B cell (primary cell): ENCODE measurements at regions of chr5 and their contacts with region 1.

Region 1: DNA sequence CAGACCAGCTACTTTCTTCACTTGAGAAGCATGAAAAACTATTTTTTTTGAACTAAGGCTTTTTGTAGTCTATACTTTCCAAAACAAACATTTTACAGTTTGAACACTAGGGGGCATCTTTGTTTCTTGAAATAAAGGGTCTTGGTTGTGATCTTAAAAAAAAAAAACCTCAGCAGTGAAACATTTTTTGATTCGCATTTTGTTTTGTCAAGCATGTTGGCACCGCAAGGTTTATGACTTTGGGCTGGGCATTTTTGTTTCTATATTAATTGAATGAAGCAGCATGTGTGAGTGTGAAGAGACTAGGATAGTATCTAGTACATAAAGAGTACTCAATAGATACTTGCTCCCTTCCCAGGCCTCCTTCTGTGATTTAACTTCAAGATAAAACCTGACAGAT is 31.6 kb upstream of the ACOT12 start:
- DNase-seq: peak; percentile 54
- ATAC-seq: no peak
- H3K4me3 ChIP-seq: no peak overlapping the region
- H3K4me3 Mint-ChIP-seq: no peak overlapping the region
- H3K27ac ChIP-seq: no peak overlapping the region
- H3K27ac Mint-ChIP-seq: peak overlapping the region; percentile 70
- H3K4me1 ChIP-seq: no peaks in the 10 kb centered on the region
- H3K4me1 Mint-ChIP-seq: peaks cover 4% of the 10 kb centered on the region
- H3K27me3 ChIP-seq: no peaks in the 10 kb centered on the region
- H3K27me3 Mint-ChIP-seq: no peaks in the 10 kb centered on the region
- CTCF ChIP-seq: peak; percentile 85

Region 2: DNA sequence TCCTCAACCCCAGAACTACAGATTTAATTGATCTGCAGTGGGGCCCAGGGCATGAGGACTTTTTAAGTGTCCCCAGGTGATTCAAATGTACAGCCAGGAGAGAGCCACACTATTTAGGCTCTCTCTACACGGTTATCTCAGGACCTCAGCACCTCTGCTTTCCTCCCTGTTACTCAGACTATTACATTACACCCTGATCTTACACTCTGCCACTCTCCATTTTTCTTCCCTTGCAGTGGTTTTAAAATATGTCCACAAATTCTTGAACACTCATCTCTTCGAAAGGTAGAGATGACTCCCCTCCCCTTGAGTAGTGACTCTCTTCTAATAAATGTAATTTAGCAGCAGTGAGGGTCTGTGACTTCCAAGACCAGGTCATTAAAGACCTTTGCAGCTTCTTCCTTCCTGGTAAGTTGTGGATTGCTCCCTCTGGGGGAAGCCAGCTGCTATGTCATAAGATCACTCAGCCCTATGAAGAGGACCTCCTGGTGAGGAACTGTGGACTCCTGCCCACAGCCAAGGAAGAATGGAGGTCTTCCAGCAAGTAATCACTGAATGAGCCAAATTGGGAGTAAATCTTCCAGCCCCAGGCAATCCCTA is 412.8 kb after region 1 on chr5:
- CTCF ChIA-PET with region 1: no interaction called
- POLR2A ChIA-PET with region 1: no interaction called
- intact Hi-C with region 1: loop called (anchors 5 kb)
- DNase-seq: peak; percentile 51
- ATAC-seq: peak; percentile 66
- H3K4me3 ChIP-seq: no peak overlapping the region
- H3K4me3 Mint-ChIP-seq: no peak overlapping the region
- H3K27ac ChIP-seq: no peak overlapping the region
- H3K27ac Mint-ChIP-seq: no peak overlapping the region
- H3K4me1 ChIP-seq: no peaks in the 10 kb centered on the region
- H3K4me1 Mint-ChIP-seq: no peaks in the 10 kb centered on the region
- H3K27me3 ChIP-seq: no peaks in the 10 kb centered on the region
- H3K27me3 Mint-ChIP-seq: no peaks in the 10 kb centered on the region
- CTCF ChIP-seq: peak; percentile 41

Region 3: DNA sequence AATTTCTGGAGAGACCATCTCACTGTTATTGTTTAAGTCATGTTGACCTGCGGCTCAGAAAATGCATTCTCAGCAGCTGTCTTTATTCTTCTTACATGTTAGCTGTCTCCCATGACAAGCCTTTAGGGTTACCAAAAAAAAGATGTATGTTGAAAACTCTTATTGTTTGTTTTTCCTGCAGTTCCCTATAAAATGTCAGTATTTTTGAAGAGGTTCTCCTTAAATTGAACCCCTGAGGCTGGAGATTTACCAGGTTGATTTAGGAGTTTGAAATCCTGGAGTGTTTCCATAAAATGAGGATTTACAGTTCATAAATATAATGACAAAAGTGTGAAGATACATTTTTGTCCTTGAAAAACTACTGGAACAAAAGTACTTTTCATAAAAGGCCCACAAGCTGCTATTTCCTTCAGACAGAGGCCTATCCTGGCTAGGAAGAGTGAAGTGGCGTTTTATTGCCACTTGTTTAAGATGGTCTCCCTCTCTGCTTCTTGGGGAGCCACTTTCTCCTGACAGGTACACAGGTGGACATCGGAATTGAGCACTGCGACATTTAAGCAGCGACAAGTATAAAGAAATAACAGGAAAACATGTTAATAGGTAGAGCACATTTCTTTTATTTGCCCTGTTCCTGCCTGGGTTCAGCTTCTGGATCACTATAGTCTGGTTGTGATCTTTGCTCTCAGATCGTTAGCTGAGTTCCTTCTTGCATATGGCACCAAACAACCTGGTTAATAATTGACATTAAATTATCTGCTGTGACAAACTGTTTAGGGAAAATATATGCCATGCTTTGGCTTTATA is 1197.3 kb after region 1 on chr5:
- CTCF ChIA-PET with region 1: no interaction called
- POLR2A ChIA-PET with region 1: no interaction called
- intact Hi-C with region 1: no loop called
- DNase-seq: no peak
- ATAC-seq: no peak
- H3K4me3 ChIP-seq: no peak overlapping the region
- H3K4me3 Mint-ChIP-seq: no peak overlapping the region
- H3K27ac ChIP-seq: no peak overlapping the region
- H3K27ac Mint-ChIP-seq: no peak overlapping the region
- H3K4me1 ChIP-seq: no peaks in the 10 kb centered on the region
- H3K4me1 Mint-ChIP-seq: no peaks in the 10 kb centered on the region
- H3K27me3 ChIP-seq: no peaks in the 10 kb centered on the region
- H3K27me3 Mint-ChIP-seq: no peaks in the 10 kb centered on the region
- CTCF ChIP-seq: no peak